Ascending aorta (tissue), 2 donors: ENCODE measurements at regions of chr10 and their contacts with region 1.

Region 1: GRCh38 chr10:119686439-119687191 is 35.4 kb downstream of the BAG3 start:
- DNase-seq: peak; percentile 43 to 86
- H3K4me3 ChIP-seq: peak overlapping the region in 1 of 2 donors; percentile 34
- H3K27ac ChIP-seq: no peak overlapping the region
- H3K4me1 ChIP-seq: peaks cover 6 to 11% of the 10 kb centered on the region in 2 donors
- H3K27me3 ChIP-seq: no peaks in the 10 kb centered on the region
- CTCF ChIP-seq: peak; percentile 90 to 96 (median 96)

Region 2: DNA sequence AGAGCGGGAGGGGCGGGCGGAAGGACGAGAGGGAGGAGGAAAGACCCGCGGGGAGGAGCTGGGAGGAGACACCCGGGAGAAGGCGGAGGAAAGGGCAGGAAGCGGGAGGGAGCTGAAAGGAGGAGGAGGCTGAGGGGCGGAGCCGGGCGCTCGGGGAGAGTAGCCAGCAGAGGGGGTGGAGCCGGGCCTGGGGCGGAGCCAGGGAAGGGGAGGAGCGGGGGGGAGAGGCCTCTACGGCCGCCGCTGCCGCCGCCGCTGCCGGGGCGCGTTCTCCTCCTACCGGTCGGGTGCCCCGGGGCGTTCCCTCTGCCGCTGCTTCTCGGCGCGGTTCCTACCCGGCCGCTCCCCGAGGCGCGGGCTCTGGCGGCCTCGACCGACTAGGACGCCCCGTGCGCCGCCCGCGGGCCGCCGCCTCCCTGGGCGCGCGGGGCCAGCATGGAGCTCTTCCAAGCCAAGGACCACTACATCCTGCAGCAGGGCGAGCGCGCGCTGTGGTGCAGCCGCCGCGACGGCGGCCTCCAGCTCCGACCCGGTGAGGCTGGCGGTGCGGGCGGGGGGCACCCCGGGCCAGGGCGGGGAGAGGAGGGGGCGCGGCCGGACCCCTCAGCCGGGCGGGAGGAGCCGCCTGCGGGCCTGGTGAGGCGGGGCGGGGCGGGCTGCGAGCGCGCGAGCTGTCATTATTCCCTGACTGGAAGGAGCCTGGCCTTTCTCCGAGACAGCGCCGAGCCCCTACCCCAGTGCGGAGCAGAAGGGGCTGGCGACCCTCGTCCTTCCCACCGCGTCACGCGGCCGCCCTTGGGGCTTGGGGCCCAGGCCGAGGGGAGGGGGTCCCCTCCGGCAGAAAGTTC is 39.4 kb after region 1 on chr10 and contains the start of gene INPP5F:
- intact Hi-C with region 1: loop called (anchors 2 kb)
- DNase-seq: peak; percentile 94 to 99
- H3K4me3 ChIP-seq: peak within 1 kb of the TSS; percentile 86 to 94
- H3K27ac ChIP-seq: peak within 1 kb of the TSS; percentile 93 to 94
- H3K4me1 ChIP-seq: peaks cover 7 to 14% of the 10 kb centered on the region in 2 donors
- H3K27me3 ChIP-seq: no peaks in the 10 kb centered on the region
- CTCF ChIP-seq: peak; percentile 24 to 49 (median 34)
- total RNA-seq, gene INPP5F: 5.1 TPM